Activated T-helper 2 cell treated with anti-CD3 and anti-CD28 coated beads, Interferon-gamma antibody, Interleukin-2, Interleukin-4, amounts not matched to agents 10 μg/mL and 5 μg/mL and 100 μg/mL, durations not matched to agents 14 hours and 24 hours and 36 hours (primary cell): ENCODE measurements at regions of chr11 and their contacts with region 1.

Region 1: DNA sequence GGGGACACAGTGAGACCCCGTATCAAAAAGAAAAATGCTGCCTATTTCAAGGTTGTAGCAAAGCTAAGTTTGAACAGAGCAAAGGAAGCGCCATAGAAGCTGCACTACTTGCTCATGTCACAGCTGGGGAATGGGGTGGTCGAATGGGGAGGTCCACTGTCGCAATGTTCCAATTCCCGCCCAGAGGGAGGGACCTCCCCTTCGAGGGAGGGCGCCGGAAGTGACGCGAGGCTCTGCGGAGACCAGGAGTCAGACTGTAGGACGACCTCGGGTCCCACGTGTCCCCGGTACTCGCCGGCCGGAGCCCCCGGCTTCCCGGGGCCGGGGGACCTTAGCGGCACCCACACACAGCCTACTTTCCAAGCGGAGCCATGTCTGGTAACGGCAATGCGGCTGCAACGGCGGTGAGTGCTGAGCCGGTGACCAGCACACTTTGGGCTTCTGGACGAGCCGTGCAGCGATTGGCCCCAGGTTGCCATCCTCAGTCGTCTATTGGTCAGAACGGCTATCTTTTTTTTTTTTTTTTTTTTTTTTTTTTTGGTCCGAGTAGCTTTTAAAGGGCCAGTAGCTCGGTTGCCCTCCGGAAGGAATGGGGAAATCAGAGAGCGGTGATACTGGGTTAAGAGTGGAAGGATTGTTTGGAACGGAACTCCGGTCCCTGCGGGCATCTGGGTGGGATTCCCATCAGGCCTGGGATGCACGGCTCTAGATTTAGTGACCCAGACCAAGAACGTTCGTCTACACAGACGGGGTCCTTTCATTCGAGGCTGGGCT is at the start of gene HMBS:
- DNase-seq: peak; percentile 91
- H3K4me3 Mint-ChIP-seq: peak within 1 kb of the TSS; percentile 96
- H3K27ac Mint-ChIP-seq: peak within 1 kb of the TSS; percentile 93
- H3K4me1 Mint-ChIP-seq: peaks cover 29% of the 10 kb centered on the region
- H3K27me3 Mint-ChIP-seq: no peaks in the 10 kb centered on the region
- total RNA-seq, gene HMBS: 57.4 and 59.0 TPM in 2 replicates

Region 2: GRCh38 chr11:118973962-118974361 is 110.9 kb before region 1 on chr11:
- intact Hi-C with region 1: no loop called
- DNase-seq: no peak
- H3K4me3 Mint-ChIP-seq: no peak overlapping the region
- H3K27ac Mint-ChIP-seq: no peak overlapping the region
- H3K4me1 Mint-ChIP-seq: no peaks in the 10 kb centered on the region
- H3K27me3 Mint-ChIP-seq: peaks cover 21% of the 10 kb centered on the region

Region 3: GRCh38 chr11:119121008-119121810 is 36.4 kb after region 1 on chr11 and contains the start of gene HINFP:
- intact Hi-C with region 1: loop called (anchors 1 kb)
- DNase-seq: peak; percentile 99
- H3K4me3 Mint-ChIP-seq: peak within 1 kb of the TSS; percentile 92
- H3K27ac Mint-ChIP-seq: peak within 1 kb of the TSS; percentile 87
- H3K4me1 Mint-ChIP-seq: peaks cover 22% of the 10 kb centered on the region
- H3K27me3 Mint-ChIP-seq: no peaks in the 10 kb centered on the region
- total RNA-seq, gene HINFP: 29.8 and 35.5 TPM in 2 replicates